Calu3 (cell line): ENCODE measurements at regions of chr2 and their contacts with region 1.

Region 1: GRCh38 chr2:188512456-188512855 is 220.8 kb downstream of the GULP1 start:
- DNase-seq: no peak
- H3K4me3 Mint-ChIP-seq: no peak overlapping the region
- H3K27ac Mint-ChIP-seq: no peak overlapping the region
- H3K4me1 Mint-ChIP-seq: peaks cover 17% of the 10 kb centered on the region
- H3K27me3 Mint-ChIP-seq: no peaks in the 10 kb centered on the region
- CTCF ChIP-seq: no peak

Region 2: GRCh38 chr2:187581125-187581896 is 931.1 kb before region 1 on chr2:
- CTCF ChIA-PET with region 1: no interaction called
- intact Hi-C with region 1: loop called (anchors 5 kb)
- DNase-seq: peak; percentile 58
- H3K4me3 Mint-ChIP-seq: peak overlapping the region; percentile 39
- H3K27ac Mint-ChIP-seq: peak overlapping the region; percentile 79
- H3K4me1 Mint-ChIP-seq: peaks cover 32% of the 10 kb centered on the region
- H3K27me3 Mint-ChIP-seq: no peaks in the 10 kb centered on the region
- CTCF ChIP-seq: peak; percentile 59

Region 3: DNA sequence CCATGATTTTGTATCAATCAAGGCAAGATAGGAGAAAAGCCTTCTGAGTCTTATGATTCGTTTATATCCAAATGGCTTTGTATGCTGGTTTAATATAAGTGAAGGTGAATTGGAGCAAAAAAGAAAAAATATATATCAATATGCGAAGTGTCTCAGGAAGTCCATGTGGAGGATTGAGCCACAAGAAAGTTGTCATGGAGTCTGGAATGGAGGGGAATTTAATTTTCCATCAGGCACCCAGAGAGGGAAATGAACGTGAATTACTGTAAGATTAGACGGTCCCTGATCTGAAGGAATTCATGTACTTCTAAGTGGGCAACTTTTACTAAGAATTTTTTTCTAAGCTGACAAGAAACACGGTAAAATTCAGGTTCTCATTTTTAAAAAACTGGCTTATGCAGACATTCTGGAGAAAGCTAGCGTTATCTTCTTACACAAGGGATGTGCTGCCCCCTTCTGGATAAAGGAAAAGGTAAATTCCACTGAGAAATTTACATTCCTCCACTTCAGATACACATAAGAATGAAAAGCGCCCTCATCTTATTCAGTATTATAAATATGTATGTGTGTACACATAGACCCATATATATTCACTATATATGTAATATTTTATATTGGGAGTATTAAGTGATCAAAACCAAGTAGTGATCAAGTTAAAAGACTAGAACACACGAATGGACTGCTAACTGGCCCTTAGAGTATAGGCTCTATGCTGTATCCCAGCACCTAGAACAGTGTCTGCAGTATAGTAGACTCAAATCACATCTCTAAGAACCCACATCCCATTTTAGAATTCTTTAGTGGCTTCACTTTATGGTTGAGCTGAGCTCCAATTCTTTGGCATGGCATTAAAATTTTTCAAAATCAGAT is 669.2 kb before region 1 on chr2:
- CTCF ChIA-PET with region 1: no interaction called
- intact Hi-C with region 1: loop called (anchors 2 kb)
- DNase-seq: peak; percentile 45
- H3K4me3 Mint-ChIP-seq: no peak overlapping the region
- H3K27ac Mint-ChIP-seq: no peak overlapping the region
- H3K4me1 Mint-ChIP-seq: peaks cover 17% of the 10 kb centered on the region
- H3K27me3 Mint-ChIP-seq: no peaks in the 10 kb centered on the region
- CTCF ChIP-seq: peak; percentile 56

Region 4: DNA sequence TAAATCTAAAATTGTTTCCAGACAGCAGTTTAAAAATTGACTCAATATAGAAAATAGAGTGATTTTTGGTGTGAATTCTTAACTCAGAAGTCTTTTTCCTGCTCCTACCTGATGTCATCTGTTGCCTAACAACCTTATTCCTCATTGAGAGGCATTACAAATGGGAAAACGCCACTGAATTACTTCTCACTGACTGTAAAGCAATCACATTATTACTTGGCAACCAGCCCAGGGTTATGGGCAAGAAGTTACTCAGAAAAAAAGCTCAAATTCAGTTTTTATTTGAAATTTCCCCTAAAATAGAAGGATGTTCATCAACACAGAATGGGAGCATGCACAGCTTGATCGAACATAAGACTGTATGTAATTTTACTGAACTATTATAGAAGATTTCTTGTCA is 422.6 kb before region 1 on chr2:
- CTCF ChIA-PET with region 1: no interaction called
- intact Hi-C with region 1: loop called (anchors 10 kb)
- DNase-seq: no peak
- H3K4me3 Mint-ChIP-seq: no peak overlapping the region
- H3K27ac Mint-ChIP-seq: no peak overlapping the region
- H3K4me1 Mint-ChIP-seq: no peaks in the 10 kb centered on the region
- H3K27me3 Mint-ChIP-seq: no peaks in the 10 kb centered on the region
- CTCF ChIP-seq: no peak

Region 5: GRCh38 chr2:188291617-188292347 is 220.7 kb before region 1 on chr2 and contains the start of gene GULP1:
- CTCF ChIA-PET with region 1: interaction called, 5 read pairs
- intact Hi-C with region 1: loop called (anchors 2 kb)
- DNase-seq: peak; percentile 82
- H3K4me3 Mint-ChIP-seq: peak within 1 kb of the TSS; percentile 95
- H3K27ac Mint-ChIP-seq: peak within 1 kb of the TSS; percentile 96
- H3K4me1 Mint-ChIP-seq: peaks cover 15% of the 10 kb centered on the region
- H3K27me3 Mint-ChIP-seq: no peaks in the 10 kb centered on the region
- CTCF ChIP-seq: peak; percentile 73
- total RNA-seq, gene GULP1: 86.8 and 94.4 TPM in 2 replicates

Region 6: GRCh38 chr2:188746727-188747126 is 234.3 kb after region 1 on chr2:
- CTCF ChIA-PET with region 1: no interaction called
- intact Hi-C with region 1: no loop called
- DNase-seq: no peak
- H3K4me3 Mint-ChIP-seq: no peak overlapping the region
- H3K27ac Mint-ChIP-seq: no peak overlapping the region
- H3K4me1 Mint-ChIP-seq: peaks cover 9% of the 10 kb centered on the region
- H3K27me3 Mint-ChIP-seq: no peaks in the 10 kb centered on the region
- CTCF ChIP-seq: no peak

Region 7: DNA sequence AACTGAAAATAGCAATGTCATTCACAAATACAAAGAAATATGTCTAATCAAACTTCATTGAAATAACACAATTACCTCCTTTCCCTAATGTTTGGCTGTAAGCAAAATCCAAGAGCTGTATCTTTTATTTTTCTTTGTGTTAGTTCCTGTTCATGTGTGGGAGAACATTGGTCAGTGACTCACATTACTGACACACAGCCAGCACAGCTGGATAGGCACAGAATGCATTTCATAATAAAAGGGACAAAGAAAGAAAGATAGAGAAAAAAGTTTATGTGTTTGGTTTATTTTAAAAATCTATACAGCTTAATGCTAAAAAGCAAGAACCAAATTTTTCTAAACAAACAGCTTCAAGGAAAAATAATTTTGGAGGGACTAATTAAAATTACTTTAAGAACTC is 276.2 kb after region 1 on chr2:
- CTCF ChIA-PET with region 1: no interaction called
- intact Hi-C with region 1: no loop called
- DNase-seq: peak; percentile 11
- H3K4me3 Mint-ChIP-seq: no peak overlapping the region
- H3K27ac Mint-ChIP-seq: no peak overlapping the region
- H3K4me1 Mint-ChIP-seq: peaks cover 8% of the 10 kb centered on the region
- H3K27me3 Mint-ChIP-seq: no peaks in the 10 kb centered on the region
- CTCF ChIP-seq: no peak